Dorsolateral prefrontal cortex (tissue), 120 donors: ENCODE measurements at regions of chr4 and their contacts with region 1.

Region 1: GRCh38 chr4:143184217-143185116 is at the start of gene USP38:
- DNase-seq: peak; percentile 79 to 95 (median 91)
- H3K4me3 ChIP-seq: peak within 1 kb of the TSS; percentile 66 to 99 (median 91)
- H3K27ac ChIP-seq: peak within 1 kb of the TSS; percentile 57 to 96 (median 90)
- H3K27me3 ChIP-seq: no peaks in the 10 kb centered on the region
- CTCF ChIP-seq: peak in 32 of 56 donors; percentile 4 to 63 (median 29)
- total RNA-seq, gene USP38: 13.4 to 24.2 (median 17.7) TPM

Region 2: DNA sequence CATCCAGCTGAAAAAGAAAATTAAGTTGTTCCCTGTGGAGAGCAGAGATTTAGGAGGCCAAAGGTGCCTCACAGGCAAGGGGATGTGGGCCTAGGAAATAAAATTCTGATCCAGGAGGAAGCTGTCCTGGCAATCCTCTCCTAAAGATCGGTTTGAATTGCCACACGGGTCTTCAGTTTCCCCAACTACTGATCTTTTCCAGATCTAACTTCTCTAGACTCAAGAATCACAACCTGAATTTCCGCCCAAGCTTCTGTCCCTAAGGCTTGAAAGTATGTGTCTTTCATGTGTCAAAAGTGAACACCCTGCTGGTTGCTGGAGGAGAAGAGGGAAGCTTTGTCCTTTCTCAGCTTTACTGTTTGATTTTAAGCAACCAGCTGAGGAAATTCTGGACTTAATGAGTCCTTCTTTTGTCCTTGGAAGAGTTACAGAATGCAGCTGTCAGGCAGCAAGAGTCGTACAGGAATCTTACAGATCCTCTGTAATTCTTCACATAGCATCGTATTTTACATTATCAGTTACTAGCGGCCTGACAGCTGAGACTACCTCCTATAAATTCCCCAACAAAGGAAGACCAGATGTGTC is 432.2 kb before region 1 on chr4:
- intact Hi-C with region 1: no loop called
- DNase-seq: no peak
- H3K4me3 ChIP-seq: no peak overlapping the region
- H3K27ac ChIP-seq: peak overlapping the region in 2 of 59 donors; percentile 5 to 23
- H3K27me3 ChIP-seq: no peaks in the 10 kb centered on the region
- CTCF ChIP-seq: no peak

Region 3: GRCh38 chr4:143513306-143514168 is 329.1 kb after region 1 on chr4 and contains the start of gene SMARCA5:
- intact Hi-C with region 1: loop called (anchors 10 kb)
- DNase-seq: peak; percentile 89 to 96 (median 94)
- H3K4me3 ChIP-seq: peak within 1 kb of the TSS; percentile 62 to 96 (median 88)
- H3K27ac ChIP-seq: peak within 1 kb of the TSS; percentile 86 to 99 (median 96)
- H3K27me3 ChIP-seq: no peaks in the 10 kb centered on the region
- CTCF ChIP-seq: peak in 22 of 56 donors; percentile 2 to 49 (median 18)
- total RNA-seq, gene SMARCA5: 33.7 to 73.2 (median 51.5) TPM